ENCODE measurements at regions of chr2 and their contacts with region 1.

Region 1: GRCh38 chr2:180125245-180125962 is 118.3 kb upstream of the CWC22 start:
- DNase-seq: peak; percentile 78
- ATAC-seq: peak; percentile 96
- H3K4me3 ChIP-seq: no peak overlapping the region; a peak in 1 of 6 replicates
- H3K27ac ChIP-seq: no peak overlapping the region
- H3K4me1 ChIP-seq: peaks cover 5% of the 10 kb centered on the region; the same call in 1 of the 2 replicates
- H3K27me3 ChIP-seq: no peaks in the 10 kb centered on the region
- CTCF ChIP-seq: peak; percentile 67
- EP300 ChIP-seq: no peak
- POLR2A ChIP-seq: no peak
- RAD21 ChIP-seq: 0 out of 2 replicates have a peak, but pooled peaks have one; percentile 20

Region 2: DNA sequence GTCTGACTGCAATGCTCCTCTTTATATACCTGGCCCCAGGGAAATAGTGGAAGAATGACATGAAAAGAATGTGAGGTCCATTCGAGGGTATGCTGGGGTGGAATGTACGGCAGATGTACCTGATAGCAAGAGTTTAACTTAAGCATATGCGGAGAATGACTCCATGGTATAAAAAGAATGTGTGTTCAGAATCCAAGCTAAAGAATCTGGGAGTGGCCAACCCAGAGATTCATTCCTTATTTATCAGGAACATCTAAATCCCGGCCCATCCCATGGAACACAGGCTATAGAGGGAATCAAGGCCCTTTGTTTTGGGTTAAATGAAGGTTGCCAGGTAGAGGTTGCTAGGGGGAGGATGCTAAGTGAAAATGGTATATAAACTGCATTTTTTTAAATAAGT is 414.0 kb before region 1 on chr2:
- CTCF ChIA-PET with region 1: no interaction called
- POLR2A ChIA-PET with region 1: no interaction called
- in situ Hi-C with region 1: no loop called
- intact Hi-C with region 1: no loop called
- DNase-seq: peak; percentile 6
- ATAC-seq: no peak
- H3K4me3 ChIP-seq: no peak overlapping the region
- H3K27ac ChIP-seq: no peak overlapping the region
- H3K4me1 ChIP-seq: no peaks in the 10 kb centered on the region
- H3K27me3 ChIP-seq: peaks cover 0 to 7% of the 10 kb centered on the region in 2 experiments; a peak in 2 of 5 replicates
- CTCF ChIP-seq: no peak
- EP300 ChIP-seq: no peak
- POLR2A ChIP-seq: no peak
- RAD21 ChIP-seq: no peak

Region 3: GRCh38 chr2:181077128-181077709 is 951.8 kb after region 1 on chr2:
- CTCF ChIA-PET with region 1: no interaction called
- POLR2A ChIA-PET with region 1: no interaction called
- in situ Hi-C with region 1: no loop called
- intact Hi-C with region 1: loop called (anchors 1 kb)
- DNase-seq: peak; percentile 60
- ATAC-seq: peak; percentile 94
- H3K4me3 ChIP-seq: no peak overlapping the region
- H3K27ac ChIP-seq: no peak overlapping the region
- H3K4me1 ChIP-seq: no peaks in the 10 kb centered on the region
- H3K27me3 ChIP-seq: no peaks in the 10 kb centered on the region
- CTCF ChIP-seq: peak; percentile 77
- EP300 ChIP-seq: no peak
- POLR2A ChIP-seq: no peak
- RAD21 ChIP-seq: no peak; the same call in 1 of the 2 replicates

Measured in HepG2 (cell line).